Mammary epithelial cell (primary cell): ENCODE measurements at regions of chr9 and their contacts with region 1.

Region 1: GRCh38 chr9:15277400-15278090 is 29.5 kb downstream of the TTC39B start:
- DNase-seq: peak; percentile 22
- H3K4me3 ChIP-seq: no peak overlapping the region
- H3K27ac ChIP-seq: no peak overlapping the region
- H3K4me1 ChIP-seq: no peaks in the 10 kb centered on the region
- H3K27me3 ChIP-seq: no peaks in the 10 kb centered on the region
- CTCF ChIP-seq: peak; percentile 9 to 29

Region 2: DNA sequence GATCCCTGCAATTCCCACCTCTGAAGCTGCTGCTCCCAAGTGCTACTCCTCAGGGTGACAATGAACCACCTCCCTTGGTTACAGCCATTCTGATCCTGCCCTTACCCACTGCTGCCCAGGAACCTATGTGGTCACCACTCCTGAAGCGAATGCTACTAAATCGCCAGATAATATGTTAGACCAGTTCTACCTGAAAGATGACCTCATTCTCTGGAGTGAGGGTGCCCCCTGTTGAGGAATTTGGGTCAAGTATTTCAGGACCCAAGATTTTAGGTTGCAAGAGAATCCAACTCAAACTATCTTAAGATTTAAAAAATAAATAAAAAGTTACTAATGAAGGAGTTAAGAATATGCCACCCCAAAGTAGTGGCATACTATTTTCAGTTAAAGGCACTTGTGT is 139.3 kb after region 1 on chr9:
- CTCF ChIA-PET with region 1: no interaction called
- dilution Hi-C with region 1: no loop called
- in situ Hi-C with region 1: no loop called
- intact Hi-C with region 1: loop called (anchors 2 kb)
- DNase-seq: peak; percentile 43
- H3K4me3 ChIP-seq: no peak overlapping the region
- H3K27ac ChIP-seq: no peak overlapping the region
- H3K4me1 ChIP-seq: peaks cover 4% of the 10 kb centered on the region
- H3K27me3 ChIP-seq: no peaks in the 10 kb centered on the region
- CTCF ChIP-seq: peak; percentile 49 to 65